ENCODE measurements at regions of chr19 and their contacts with region 1.

Region 1: DNA sequence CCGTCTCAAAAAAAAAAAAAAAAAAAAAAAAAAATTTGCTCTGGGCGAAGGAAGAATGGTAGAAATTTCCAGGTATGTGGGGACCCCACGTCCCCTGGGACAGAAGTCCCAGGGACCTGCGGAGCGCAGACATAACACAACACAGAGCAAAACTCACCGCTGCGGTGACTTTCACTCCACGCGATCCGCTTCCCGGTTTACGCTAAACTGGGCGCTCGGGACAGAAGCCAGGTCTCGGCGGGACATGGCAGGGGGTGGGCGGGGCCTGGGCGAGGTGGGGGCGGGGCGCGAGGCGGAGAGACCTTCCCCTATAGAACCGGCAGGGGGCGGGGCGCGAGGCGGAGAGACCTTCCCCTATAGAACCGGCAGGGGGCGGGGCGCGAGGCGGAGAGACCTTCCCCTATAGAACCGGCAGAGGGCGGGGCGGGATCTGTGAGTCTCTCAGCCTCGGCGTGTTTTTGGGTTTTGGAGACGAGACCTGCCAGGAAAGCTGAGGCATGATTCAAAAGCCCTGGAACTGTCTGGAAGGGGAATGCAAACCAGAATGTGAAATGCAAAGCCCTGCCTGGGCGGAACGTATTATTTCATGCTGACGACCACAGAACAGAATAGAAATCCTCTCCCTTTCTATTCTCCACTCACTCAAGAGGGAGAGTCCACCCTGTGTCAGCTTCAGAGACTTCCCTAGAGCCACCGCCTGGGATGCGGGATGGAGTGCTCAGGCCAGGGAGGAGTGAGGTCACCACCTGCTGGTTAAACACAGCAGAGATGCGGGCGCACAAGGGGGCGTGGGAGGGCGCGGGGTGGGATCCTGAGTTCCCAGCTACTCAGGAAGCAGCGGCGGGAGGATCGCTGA is 20.2 kb upstream of the ERVV-1 start:
- DNase-seq: peak; percentile 77 to 90 (median 83)
- H3K4me3 ChIP-seq: peak overlapping the region; percentile 49 to 81
- H3K4me3 Mint-ChIP-seq: peak overlapping the region; percentile 69 to 96 (median 90)
- H3K27ac ChIP-seq: no peak overlapping the region
- H3K27ac Mint-ChIP-seq: peak overlapping the region in 6 of 7 donors; percentile 27 to 86 (median 68)
- H3K4me1 ChIP-seq: peaks cover 14% of the 10 kb centered on the region
- H3K4me1 Mint-ChIP-seq: peaks cover 3 to 23% (median 18%) of the 10 kb centered on the region in 4 donors
- H3K27me3 ChIP-seq: no peaks in the 10 kb centered on the region
- H3K27me3 Mint-ChIP-seq: peaks cover 5 to 9% of the 10 kb centered on the region in 2 donors

Region 2: DNA sequence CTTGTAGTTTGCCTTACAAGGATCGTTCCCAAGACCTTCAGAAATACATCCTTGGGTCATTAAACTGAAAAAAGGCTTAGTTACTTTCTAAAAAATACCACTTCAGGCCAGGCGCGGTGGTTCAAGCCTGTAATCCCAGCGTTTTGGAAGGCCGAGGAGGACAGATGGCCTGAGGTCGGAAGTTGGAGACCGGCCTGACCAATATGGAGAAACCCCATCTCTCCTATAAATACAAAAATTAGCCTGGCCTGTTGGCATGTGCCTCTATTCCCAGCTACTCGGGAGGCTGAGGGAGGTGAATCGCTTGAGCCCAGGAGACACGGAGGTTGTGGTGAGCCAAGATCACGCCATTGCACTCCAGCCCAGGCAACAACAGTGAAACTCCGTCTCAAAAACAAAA is 169.9 kb before region 1 on chr19:
- CTCF ChIA-PET with region 1: no interaction called
- POLR2A ChIA-PET with region 1: no interaction called
- intact Hi-C with region 1: no loop called
- DNase-seq: no peak
- H3K4me3 ChIP-seq: no peak overlapping the region
- H3K4me3 Mint-ChIP-seq: no peak overlapping the region
- H3K27ac ChIP-seq: no peak overlapping the region
- H3K27ac Mint-ChIP-seq: no peak overlapping the region
- H3K4me1 ChIP-seq: peaks cover 8% of the 10 kb centered on the region
- H3K4me1 Mint-ChIP-seq: peaks cover 13 to 26% (median 17%) of the 10 kb centered on the region in 4 donors
- H3K27me3 ChIP-seq: no peaks in the 10 kb centered on the region
- H3K27me3 Mint-ChIP-seq: no peaks in the 10 kb centered on the region

Region 3: DNA sequence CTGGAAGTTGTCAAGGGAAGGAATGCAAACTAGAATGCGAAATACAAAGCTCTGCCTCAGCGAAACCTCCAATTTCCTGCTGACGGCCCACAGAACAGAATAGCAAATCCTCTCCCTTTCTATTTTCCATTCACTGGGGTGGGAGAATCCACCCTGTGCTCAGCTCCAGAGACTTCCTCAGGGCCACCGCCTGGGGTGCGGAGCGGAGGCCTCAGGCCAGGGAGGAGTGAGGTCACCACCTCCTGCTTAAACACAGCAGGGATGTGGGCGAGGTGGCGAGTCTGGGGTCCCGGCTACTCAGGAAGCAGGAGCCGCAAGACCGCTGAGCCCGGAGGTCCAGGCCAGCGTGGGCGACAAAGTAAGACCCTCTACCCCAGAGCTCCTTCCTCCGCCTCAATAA is 95.5 kb before region 1 on chr19:
- CTCF ChIA-PET with region 1: no interaction called
- POLR2A ChIA-PET with region 1: no interaction called
- intact Hi-C with region 1: no loop called
- DNase-seq: no peak
- H3K4me3 ChIP-seq: peak overlapping the region; percentile 77 to 95
- H3K4me3 Mint-ChIP-seq: peak overlapping the region; percentile 90 to 96 (median 94)
- H3K27ac ChIP-seq: peak overlapping the region; percentile 10
- H3K27ac Mint-ChIP-seq: peak overlapping the region in 3 of 7 donors; percentile 23 to 85 (median 24)
- H3K4me1 ChIP-seq: peaks cover 14% of the 10 kb centered on the region
- H3K4me1 Mint-ChIP-seq: peaks cover 3 to 19% (median 16%) of the 10 kb centered on the region in 4 donors
- H3K27me3 ChIP-seq: no peaks in the 10 kb centered on the region
- H3K27me3 Mint-ChIP-seq: no peaks in the 10 kb centered on the region

Region 4: DNA sequence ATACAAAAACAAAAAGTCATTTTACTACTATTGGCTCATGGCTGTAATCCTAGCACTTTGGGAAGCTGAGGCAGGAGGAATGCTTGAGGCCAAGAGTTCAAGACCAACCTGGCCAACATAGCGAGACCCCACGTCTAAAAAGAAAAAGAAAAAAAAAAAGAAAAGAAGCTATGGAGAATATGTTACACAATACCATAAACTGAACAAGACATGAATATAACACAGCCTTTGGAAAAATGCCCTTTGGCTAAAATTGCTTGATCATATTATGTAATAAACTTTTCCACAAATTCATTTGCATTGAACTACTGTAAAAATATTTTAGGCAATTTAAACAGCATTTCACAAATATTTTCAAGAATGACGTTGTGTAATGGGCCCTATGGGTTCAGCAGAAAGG is 142.9 kb after region 1 on chr19:
- CTCF ChIA-PET with region 1: no interaction called
- POLR2A ChIA-PET with region 1: no interaction called
- intact Hi-C with region 1: no loop called
- DNase-seq: no peak
- H3K4me3 ChIP-seq: no peak overlapping the region
- H3K4me3 Mint-ChIP-seq: no peak overlapping the region
- H3K27ac ChIP-seq: no peak overlapping the region
- H3K27ac Mint-ChIP-seq: no peak overlapping the region
- H3K4me1 ChIP-seq: no peaks in the 10 kb centered on the region
- H3K4me1 Mint-ChIP-seq: peaks cover 0 to 8% (median 4%) of the 10 kb centered on the region in 4 donors
- H3K27me3 ChIP-seq: no peaks in the 10 kb centered on the region
- H3K27me3 Mint-ChIP-seq: peaks cover 3 to 4% of the 10 kb centered on the region in 2 donors

Region 5: DNA sequence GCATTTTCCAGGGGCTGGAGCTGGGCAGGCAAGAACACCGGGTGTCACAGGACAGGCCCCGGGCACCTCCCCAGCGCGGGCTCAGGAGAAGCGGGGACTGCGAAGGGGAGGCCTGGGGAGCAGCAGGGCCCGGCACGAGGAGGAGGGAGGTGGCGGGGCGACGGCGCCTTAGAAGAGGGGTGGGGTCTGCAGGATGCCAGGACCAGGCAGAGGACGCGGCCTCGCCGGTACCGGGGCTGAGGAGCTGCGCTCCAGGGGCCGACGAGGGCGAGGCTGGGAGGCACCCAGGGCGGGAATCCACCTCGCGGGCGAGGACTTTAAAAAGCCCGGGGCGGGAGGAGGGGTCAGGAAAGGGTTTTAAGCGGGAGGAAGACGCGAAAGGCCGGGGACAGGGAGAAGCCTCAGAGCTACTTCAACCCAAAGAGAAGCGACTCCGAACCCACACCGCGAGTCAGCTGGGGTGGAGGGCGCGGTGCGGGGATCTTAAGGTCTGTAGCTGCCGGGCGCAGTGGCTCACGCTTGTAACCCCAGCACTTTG is 164.6 kb after region 1 on chr19:
- CTCF ChIA-PET with region 1: no interaction called
- POLR2A ChIA-PET with region 1: no interaction called
- intact Hi-C with region 1: loop called (anchors 1 kb)
- DNase-seq: peak in 3 of 5 donors; percentile 12 to 57 (median 21)
- H3K4me3 ChIP-seq: peak overlapping the region; percentile 29 to 58
- H3K4me3 Mint-ChIP-seq: peak overlapping the region; percentile 86 to 89 (median 88)
- H3K27ac ChIP-seq: peak overlapping the region; percentile 44
- H3K27ac Mint-ChIP-seq: peak overlapping the region in 6 of 7 donors; percentile 82 to 90 (median 88)
- H3K4me1 ChIP-seq: peaks cover 18% of the 10 kb centered on the region
- H3K4me1 Mint-ChIP-seq: peaks cover 11 to 30% (median 13%) of the 10 kb centered on the region in 4 donors
- H3K27me3 ChIP-seq: no peaks in the 10 kb centered on the region
- H3K27me3 Mint-ChIP-seq: peaks cover 0 to 6% of the 10 kb centered on the region in 2 donors